ENCODE measurements at regions of chr3 and their contacts with region 1.

Region 1: GRCh38 chr3:24678421-24678865 is 183.8 kb upstream of the THRB start:
- DNase-seq: peak in 1 of 4 donors; percentile 44
- ATAC-seq: peak; percentile 24
- H3K4me3 ChIP-seq: no peak overlapping the region
- H3K27ac ChIP-seq: no peak overlapping the region
- H3K4me1 ChIP-seq: peaks cover under 1% of the 10 kb centered on the region
- H3K27me3 ChIP-seq: no peaks in the 10 kb centered on the region
- CTCF ChIP-seq: no peak
- POLR2A ChIP-seq: no peak

Region 2: DNA sequence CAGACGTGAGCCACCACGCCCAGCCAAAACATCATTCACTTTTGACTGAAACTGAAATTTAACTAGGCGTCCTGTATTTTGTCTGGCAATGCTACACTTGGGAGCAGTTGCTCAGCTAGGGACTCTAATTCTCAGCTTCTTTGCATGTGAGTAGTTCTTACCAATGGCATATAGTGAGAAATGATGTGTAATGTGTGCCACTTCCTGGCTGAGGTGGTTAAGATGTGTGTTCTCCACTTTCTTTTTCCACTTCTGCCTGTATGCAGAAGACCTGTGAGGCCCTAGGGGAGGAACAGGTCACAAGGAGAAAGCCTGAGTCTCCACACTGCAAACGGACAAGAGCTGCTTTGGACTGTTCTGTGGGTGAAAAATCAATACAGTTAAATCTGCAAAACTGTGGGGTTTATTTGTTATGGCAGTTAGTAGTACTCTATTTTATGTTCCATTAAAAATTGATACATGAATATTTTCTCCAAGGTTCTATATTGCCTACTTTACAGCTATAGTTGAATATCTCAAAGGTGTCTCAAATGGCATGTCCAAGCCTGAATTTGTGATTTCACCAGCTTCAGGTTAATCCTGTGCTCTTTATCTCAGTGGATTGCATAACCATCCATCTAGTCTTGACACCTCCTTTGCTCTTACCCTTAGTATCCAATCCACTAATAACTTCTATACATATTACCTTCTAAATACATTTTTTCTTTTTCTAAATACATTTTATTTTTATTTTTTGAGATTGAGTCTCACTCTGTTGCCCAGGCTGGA is 674.1 kb before region 1 on chr3:
- intact Hi-C with region 1: loop called (anchors 5 kb)
- DNase-seq: no peak
- ATAC-seq: no peak
- H3K4me3 ChIP-seq: no peak overlapping the region
- H3K27ac ChIP-seq: no peak overlapping the region
- H3K4me1 ChIP-seq: no peaks in the 10 kb centered on the region
- H3K27me3 ChIP-seq: no peaks in the 10 kb centered on the region
- CTCF ChIP-seq: no peak
- POLR2A ChIP-seq: no peak

Region 3: GRCh38 chr3:24323272-24323671 is 355.2 kb before region 1 on chr3:
- intact Hi-C with region 1: no loop called
- DNase-seq: no peak
- ATAC-seq: no peak
- H3K4me3 ChIP-seq: no peak overlapping the region
- H3K27ac ChIP-seq: no peak overlapping the region
- H3K4me1 ChIP-seq: no peaks in the 10 kb centered on the region
- H3K27me3 ChIP-seq: no peaks in the 10 kb centered on the region
- CTCF ChIP-seq: no peak
- POLR2A ChIP-seq: no peak

Region 4: GRCh38 chr3:26171006-26171405 is 1492.6 kb after region 1 on chr3:
- intact Hi-C with region 1: no loop called
- DNase-seq: no peak
- ATAC-seq: no peak
- H3K4me3 ChIP-seq: no peak overlapping the region
- H3K27ac ChIP-seq: no peak overlapping the region
- H3K4me1 ChIP-seq: no peaks in the 10 kb centered on the region
- H3K27me3 ChIP-seq: no peaks in the 10 kb centered on the region
- CTCF ChIP-seq: no peak
- POLR2A ChIP-seq: no peak

Measured in body of pancreas (tissue), 4 donors.